ENCODE measurements at regions of chr2 and their contacts with region 1.

Region 1: DNA sequence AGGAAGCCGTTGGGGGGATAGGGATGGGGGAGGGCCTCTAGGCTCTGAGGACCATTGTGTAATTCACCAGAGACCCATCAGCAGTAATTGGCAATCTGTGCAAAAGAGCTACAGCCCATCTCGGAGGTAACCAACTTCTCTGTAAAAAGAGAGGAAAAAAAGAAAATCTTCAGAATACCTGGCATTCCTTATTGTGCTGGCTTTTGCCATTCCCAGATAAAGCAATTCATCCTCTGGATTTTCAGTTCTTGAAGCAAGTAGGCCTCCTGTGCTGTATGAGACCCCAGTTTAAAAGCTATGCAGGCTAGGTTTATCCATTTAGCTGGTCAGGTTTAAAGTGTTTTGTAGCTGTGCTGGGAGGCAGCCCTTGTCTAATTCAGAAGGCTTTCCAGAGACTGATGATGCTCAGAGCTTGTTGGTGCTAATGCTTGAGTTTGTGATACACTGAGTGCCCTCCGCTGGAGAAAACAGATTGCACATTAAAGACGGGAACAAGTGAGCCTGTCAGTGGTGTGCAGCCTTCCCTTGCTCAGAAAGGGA is at the start of gene LRRTM4:
- DNase-seq: peak in 1 of 2 donors; percentile 7
- ATAC-seq: peak in 7 of 8 donors; percentile 57 to 96 (median 80)
- H3K4me3 ChIP-seq: peak within 1 kb of the TSS in 8 of 10 donors; percentile 21 to 37 (median 26)
- H3K27ac ChIP-seq: no peak within 1 kb of the TSS
- H3K4me1 ChIP-seq: peaks cover 0 to 10% (median 0%) of the 10 kb centered on the region in 9 donors
- H3K27me3 ChIP-seq: peaks cover 0 to 5% (median 0%) of the 10 kb centered on the region in 7 donors
- CTCF ChIP-seq: peak in 6 of 9 donors; percentile 20 to 52 (median 42)
- total RNA-seq, gene LRRTM4: 0.11 to 2.2 (median 1.3) TPM

Region 2: GRCh38 chr2:76953733-76954347 is 568.2 kb before region 1 on chr2:
- intact Hi-C with region 1: loop called in 4 of 10 experiments (anchors 2 to 10 kb)
- DNase-seq: peak in 1 of 2 donors; percentile 10
- ATAC-seq: peak in 4 of 8 donors; percentile 51 to 62 (median 58)
- H3K4me3 ChIP-seq: no peak overlapping the region
- H3K27ac ChIP-seq: no peak overlapping the region
- H3K4me1 ChIP-seq: no peaks in the 10 kb centered on the region
- H3K27me3 ChIP-seq: no peaks in the 10 kb centered on the region
- CTCF ChIP-seq: peak in 8 of 9 donors; percentile 36 to 69 (median 62)

Region 3: DNA sequence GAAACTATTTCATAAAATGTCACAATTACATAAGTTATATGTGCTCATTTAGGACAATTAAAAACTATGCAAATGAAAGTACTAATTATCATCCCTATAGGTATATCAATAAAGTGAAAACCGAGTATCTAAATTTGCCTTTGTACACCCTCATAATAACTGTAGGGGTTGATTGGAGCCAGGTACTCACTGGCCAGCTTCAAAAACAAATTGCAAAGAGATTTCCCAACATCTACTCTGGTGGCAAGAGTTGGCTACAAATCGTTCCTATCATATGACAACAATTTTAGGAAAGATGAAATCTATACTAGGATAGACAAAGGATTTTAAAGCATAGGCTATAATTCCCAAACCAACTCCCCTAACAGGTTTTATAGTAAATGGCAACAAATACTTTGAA is 556.2 kb before region 1 on chr2:
- intact Hi-C with region 1: loop called in 1 of 10 experiments (anchors 10 kb)
- DNase-seq: no peak
- ATAC-seq: no peak
- H3K4me3 ChIP-seq: no peak overlapping the region
- H3K27ac ChIP-seq: no peak overlapping the region
- H3K4me1 ChIP-seq: no peaks in the 10 kb centered on the region
- H3K27me3 ChIP-seq: no peaks in the 10 kb centered on the region
- CTCF ChIP-seq: no peak

Region 4: GRCh38 chr2:77434880-77435279 is 87.1 kb before region 1 on chr2:
- intact Hi-C with region 1: loop called in 3 of 10 experiments (anchors 5 kb)
- DNase-seq: no peak
- ATAC-seq: no peak
- H3K4me3 ChIP-seq: no peak overlapping the region
- H3K27ac ChIP-seq: no peak overlapping the region
- H3K4me1 ChIP-seq: no peaks in the 10 kb centered on the region
- H3K27me3 ChIP-seq: no peaks in the 10 kb centered on the region
- CTCF ChIP-seq: peak in 7 of 9 donors; percentile 12 to 48 (median 38)

Region 5: DNA sequence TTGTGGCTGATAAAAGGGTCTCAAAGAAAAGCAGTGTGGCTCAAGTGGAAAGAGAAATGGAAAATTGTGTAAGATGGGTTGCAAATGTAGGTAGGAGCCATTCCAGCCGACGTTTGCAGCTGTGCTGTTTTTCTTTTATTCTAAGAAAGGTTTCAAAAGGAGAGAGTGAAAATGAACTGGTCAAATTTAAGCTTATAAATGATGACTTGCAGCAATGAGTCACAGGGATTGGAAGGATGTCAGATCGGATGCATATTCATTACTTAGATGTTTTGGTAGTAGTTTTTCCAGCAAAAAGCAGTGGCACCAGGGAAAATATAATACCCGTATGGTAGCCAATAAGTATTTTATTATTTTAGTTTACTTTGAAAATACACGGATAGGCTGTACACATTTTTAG is 78.9 kb before region 1 on chr2:
- intact Hi-C with region 1: loop called in 3 of 10 experiments (anchors 5 kb)
- DNase-seq: no peak
- ATAC-seq: no peak
- H3K4me3 ChIP-seq: no peak overlapping the region
- H3K27ac ChIP-seq: no peak overlapping the region
- H3K4me1 ChIP-seq: no peaks in the 10 kb centered on the region
- H3K27me3 ChIP-seq: no peaks in the 10 kb centered on the region
- CTCF ChIP-seq: no peak

Region 6: DNA sequence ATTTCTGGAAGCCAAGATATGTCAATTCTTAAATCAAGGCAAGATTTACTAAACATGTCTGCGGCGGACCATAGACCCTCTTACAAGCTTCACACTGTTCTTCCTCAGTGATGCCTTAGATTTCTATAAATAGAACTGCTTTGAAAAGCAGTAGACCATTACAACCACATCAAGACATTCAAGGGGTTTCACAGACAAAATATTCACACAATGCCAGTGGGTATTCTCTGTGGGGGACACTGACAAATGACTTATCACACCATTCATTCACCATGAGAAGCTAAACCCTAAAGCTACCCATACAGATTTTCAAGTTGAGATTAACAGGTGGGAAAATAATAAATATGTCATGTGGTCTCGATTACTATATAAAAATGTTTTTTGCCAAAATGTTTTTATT is 16.0 kb after region 1 on chr2:
- intact Hi-C with region 1: loop called in 1 of 10 experiments (anchors 1 kb)
- DNase-seq: no peak
- ATAC-seq: no peak
- H3K4me3 ChIP-seq: no peak overlapping the region
- H3K27ac ChIP-seq: no peak overlapping the region
- H3K4me1 ChIP-seq: no peaks in the 10 kb centered on the region
- H3K27me3 ChIP-seq: no peaks in the 10 kb centered on the region
- CTCF ChIP-seq: no peak

Measured in heart right ventricle (tissue), 16 donors.